CD4-positive, alpha-beta T cell (primary cell): ENCODE measurements at regions of chr16 and their contacts with region 1.

Region 1: DNA sequence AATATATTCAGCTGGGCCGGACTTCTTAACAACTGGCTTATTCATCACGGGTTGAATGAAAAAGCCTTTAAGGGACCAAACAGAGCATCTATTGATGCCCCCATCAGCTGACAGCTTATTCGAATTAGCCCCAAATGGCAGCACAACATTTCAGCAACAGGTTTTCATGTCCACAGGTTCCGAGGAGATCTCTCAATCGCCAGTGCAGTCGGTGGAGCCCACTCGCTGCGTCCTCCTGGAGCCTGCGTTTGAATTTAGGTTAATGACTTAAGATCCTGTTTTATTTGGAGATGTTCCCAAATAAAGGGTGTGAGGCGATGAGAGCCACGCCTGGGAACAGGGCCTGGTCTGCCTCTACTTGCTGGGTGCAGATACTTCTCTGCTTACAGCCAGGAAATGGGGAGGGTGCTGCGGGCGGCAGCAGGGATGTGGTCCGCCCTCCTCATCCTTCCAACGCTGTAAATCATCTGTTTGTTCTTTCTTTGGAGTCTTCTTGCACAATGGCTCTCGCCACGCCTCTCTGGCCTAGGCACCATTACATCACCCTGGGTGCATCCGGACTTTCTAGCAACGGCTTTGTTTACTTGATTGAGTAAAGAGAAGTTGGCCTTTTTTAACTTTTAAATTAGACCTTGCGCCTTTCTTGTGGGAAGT is 22.6 kb downstream of the NDE1 start:
- DNase-seq: peak; percentile 57 to 93 (median 78)
- ATAC-seq: peak; percentile 95
- H3K4me3 ChIP-seq: peak overlapping the region; percentile 26
- H3K4me3 Mint-ChIP-seq: peak overlapping the region; percentile 40
- H3K27ac ChIP-seq: peak overlapping the region; percentile 94 to 96
- H3K27ac Mint-ChIP-seq: peak overlapping the region; percentile 92
- H3K4me1 ChIP-seq: peaks cover 44% of the 10 kb centered on the region
- H3K4me1 Mint-ChIP-seq: peaks cover 39% of the 10 kb centered on the region
- H3K27me3 ChIP-seq: no peaks in the 10 kb centered on the region
- H3K27me3 Mint-ChIP-seq: no peaks in the 10 kb centered on the region
- CTCF ChIP-seq: no peak

Region 2: GRCh38 chr16:15650019-15650697 is 22.5 kb before region 1 on chr16 and contains the start of gene NDE1:
- CTCF ChIA-PET with region 1: no interaction called
- POLR2A ChIA-PET with region 1: interaction called, 3 read pairs
- intact Hi-C with region 1: loop called in 1 of 2 experiments (anchors 2 kb)
- DNase-seq: peak; percentile 71 to 95 (median 83)
- ATAC-seq: peak; percentile 98
- H3K4me3 ChIP-seq: peak within 1 kb of the TSS; percentile 92
- H3K4me3 Mint-ChIP-seq: peak within 1 kb of the TSS; percentile 100
- H3K27ac ChIP-seq: peak within 1 kb of the TSS; percentile 81 to 89
- H3K27ac Mint-ChIP-seq: peak within 1 kb of the TSS; percentile 93
- H3K4me1 ChIP-seq: peaks cover 45% of the 10 kb centered on the region
- H3K4me1 Mint-ChIP-seq: peaks cover 36% of the 10 kb centered on the region
- H3K27me3 ChIP-seq: no peaks in the 10 kb centered on the region
- H3K27me3 Mint-ChIP-seq: no peaks in the 10 kb centered on the region
- CTCF ChIP-seq: no peak
- total RNA-seq, gene NDE1: 96.6 to 106 TPM

Region 3: DNA sequence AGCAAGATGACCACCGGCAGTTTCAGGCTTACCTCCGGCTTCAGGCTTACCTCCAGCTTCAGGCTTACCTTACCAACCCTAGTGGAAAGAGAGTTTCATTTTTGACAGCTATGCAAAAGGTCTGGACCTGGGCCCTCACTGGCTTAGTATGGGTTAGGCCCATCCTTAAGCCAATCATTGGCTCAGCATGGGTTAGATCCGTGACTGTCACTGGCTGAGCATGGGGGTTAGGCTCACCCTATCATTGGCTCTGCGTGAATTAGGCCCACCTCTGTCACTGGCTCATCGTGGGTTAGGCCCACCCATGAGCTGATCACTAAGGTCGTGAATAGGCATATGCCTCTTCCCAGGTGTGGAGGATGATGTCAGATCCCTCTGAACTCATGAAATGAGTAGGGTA is 14.5 kb before region 1 on chr16:
- CTCF ChIA-PET with region 1: no interaction called
- POLR2A ChIA-PET with region 1: interaction called, 10 read pairs
- intact Hi-C with region 1: no loop called
- DNase-seq: no peak
- ATAC-seq: no peak
- H3K4me3 ChIP-seq: no peak overlapping the region
- H3K4me3 Mint-ChIP-seq: no peak overlapping the region
- H3K27ac ChIP-seq: peak overlapping the region in 1 of 2 donors; percentile 40
- H3K27ac Mint-ChIP-seq: peak overlapping the region; percentile 90
- H3K4me1 ChIP-seq: peaks cover 62% of the 10 kb centered on the region
- H3K4me1 Mint-ChIP-seq: peaks cover 70% of the 10 kb centered on the region
- H3K27me3 ChIP-seq: no peaks in the 10 kb centered on the region
- H3K27me3 Mint-ChIP-seq: no peaks in the 10 kb centered on the region
- CTCF ChIP-seq: no peak